Posterior cingulate gyrus (tissue), 11 donors: ENCODE measurements at regions of chr3 and their contacts with region 1.

Region 1: DNA sequence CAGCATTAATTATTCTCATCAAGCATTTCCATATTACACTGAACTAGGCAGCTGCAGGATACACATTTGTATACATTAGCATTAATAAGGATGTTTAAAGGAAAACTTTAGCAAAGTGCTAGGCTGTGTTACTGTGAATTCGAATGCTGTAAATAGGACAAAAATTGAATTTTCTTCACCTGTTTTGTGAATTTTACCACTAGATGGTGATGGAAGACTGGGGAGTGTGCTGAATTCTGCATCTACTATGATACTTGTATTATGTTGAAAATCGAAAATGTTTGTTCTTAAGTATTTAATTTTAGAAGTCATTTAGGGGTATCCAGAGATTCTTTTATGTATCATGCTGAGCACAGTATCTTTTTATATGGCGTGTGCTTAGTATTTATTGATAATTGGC is 12.3 kb upstream of the P2RY14 start:
- DNase-seq: no peak

Region 2: GRCh38 chr3:151838583-151839312 is 548.1 kb after region 1 on chr3:
- intact Hi-C with region 1: loop called (anchors 2 kb)
- DNase-seq: peak in 5 of 10 donors; percentile 18 to 71 (median 46)